ENCODE measurements at regions of chr1 and their contacts with region 1.

Region 1: GRCh38 chr1:80498673-80499072 is 1302.1 kb upstream of the ADGRL2 start:
- ATAC-seq: no peak
- H3K4me3 ChIP-seq: no peak overlapping the region
- H3K27ac ChIP-seq: no peak overlapping the region
- H3K4me1 ChIP-seq: no peaks in the 10 kb centered on the region

Region 2: GRCh38 chr1:80375677-80376076 is 123.0 kb before region 1 on chr1:
- in situ Hi-C with region 1: loop called in 1 of 9 experiments (anchors 25 kb)
- ATAC-seq: peak in 1 of 8 experiments; percentile 48
- H3K4me3 ChIP-seq: no peak overlapping the region
- H3K27ac ChIP-seq: no peak overlapping the region
- H3K4me1 ChIP-seq: no peaks in the 10 kb centered on the region

Measured in motor neuron (in vitro differentiated cells).